ENCODE measurements at regions of chr2 and their contacts with region 1.

Region 1: DNA sequence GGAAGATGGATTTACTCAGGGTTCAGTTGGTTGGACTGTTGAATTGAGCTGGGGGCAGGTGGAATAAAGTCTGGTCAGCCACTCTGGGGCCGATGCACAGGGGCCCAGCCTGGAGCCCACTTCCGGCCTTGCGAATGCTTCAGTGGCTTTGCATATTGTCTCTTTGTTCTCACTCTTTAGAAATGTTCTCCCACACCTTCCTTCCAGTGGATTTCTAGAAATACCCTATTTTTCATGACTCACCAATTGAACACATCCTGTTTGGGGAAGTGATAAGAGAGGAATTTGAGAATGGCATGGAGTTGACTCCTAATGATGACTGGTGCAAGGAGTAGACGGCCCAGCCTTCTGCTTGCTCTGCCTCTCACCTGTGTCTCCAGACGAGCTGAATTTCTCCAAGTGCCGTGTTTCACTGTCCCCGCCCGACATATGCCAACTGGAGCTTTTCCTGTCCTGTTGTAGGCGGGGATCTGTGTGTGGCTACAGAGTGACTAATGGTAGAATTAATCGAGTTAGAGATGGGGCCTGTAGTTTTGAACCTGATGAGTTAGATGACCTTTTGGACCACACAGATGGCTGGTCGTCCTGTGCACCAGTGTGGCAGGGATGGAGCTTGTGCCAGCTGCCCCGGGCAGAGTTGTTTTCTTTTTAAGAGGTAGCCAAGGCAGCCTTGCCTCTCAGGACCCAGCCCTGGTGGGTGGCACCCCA is 28.2 kb downstream of the ASAP2 start:
- DNase-seq: peak; percentile 90 to 99
- H3K4me3 ChIP-seq: peak overlapping the region; percentile 59
- H3K27ac ChIP-seq: peak overlapping the region; percentile 98
- H3K4me1 ChIP-seq: peaks cover 93% of the 10 kb centered on the region
- H3K27me3 ChIP-seq: no peaks in the 10 kb centered on the region
- CTCF ChIP-seq: no peak

Region 2: GRCh38 chr2:9142551-9143263 is 92.1 kb before region 1 on chr2:
- CTCF ChIA-PET with region 1: no interaction called
- POLR2A ChIA-PET with region 1: no interaction called
- intact Hi-C with region 1: loop called (anchors 2 kb)
- DNase-seq: peak; percentile 85 to 97
- H3K4me3 ChIP-seq: peak overlapping the region; percentile 23; the same call in 1 of the 2 replicates
- H3K27ac ChIP-seq: peak overlapping the region; percentile 45
- H3K4me1 ChIP-seq: peaks cover 60% of the 10 kb centered on the region
- H3K27me3 ChIP-seq: no peaks in the 10 kb centered on the region
- CTCF ChIP-seq: peak; percentile 99

Region 3: DNA sequence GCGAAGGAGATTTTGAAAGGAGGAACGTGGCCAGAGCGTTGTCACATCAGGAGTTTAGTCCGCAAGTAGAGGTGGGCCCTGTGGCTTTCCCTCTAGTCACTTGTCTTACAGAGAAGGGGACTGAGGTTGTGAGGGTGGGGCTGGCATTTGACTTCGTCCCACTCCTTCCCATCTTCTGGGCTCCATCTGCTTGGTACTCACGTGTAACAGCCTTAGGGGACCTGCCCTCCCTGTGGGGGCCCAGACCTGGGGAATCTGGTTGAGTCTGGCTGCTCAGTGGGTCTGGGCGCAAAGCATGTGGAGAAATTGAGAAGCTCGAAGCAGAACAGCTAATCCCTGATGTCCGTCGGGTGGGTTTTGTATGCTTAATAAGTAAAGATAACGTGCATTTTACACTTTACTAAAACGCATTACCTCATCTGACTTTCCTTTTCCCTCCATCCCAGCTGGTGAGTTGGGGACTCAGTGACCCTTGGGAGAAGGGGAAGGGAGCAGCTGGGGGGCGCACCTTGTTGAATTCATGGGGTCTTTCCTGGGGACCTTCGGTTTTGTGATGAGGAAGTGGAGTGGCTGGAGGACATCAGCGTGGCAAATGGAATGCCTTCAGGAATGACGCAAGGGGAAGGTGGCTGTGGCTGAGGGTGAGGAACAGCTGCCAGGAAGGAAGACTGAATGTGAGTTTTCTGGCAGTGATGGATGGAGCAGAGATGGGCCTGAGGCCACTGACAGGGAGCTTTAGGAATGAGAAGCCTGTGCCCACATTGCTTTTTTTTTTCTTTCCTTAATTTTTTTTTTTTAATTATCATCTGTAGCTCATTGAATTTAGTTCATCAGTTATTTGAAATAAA is 16.5 kb after region 1 on chr2:
- CTCF ChIA-PET with region 1: no interaction called
- POLR2A ChIA-PET with region 1: interaction called, 4 read pairs
- intact Hi-C with region 1: loop called (anchors 1 kb)
- DNase-seq: peak; percentile 81 to 94
- H3K4me3 ChIP-seq: peak overlapping the region; percentile 9; the same call in 1 of the 2 replicates
- H3K27ac ChIP-seq: peak overlapping the region; percentile 67
- H3K4me1 ChIP-seq: peaks cover 59% of the 10 kb centered on the region
- H3K27me3 ChIP-seq: no peaks in the 10 kb centered on the region
- CTCF ChIP-seq: no peak

Region 4: GRCh38 chr2:9310377-9310776 is 75.5 kb after region 1 on chr2:
- CTCF ChIA-PET with region 1: no interaction called
- POLR2A ChIA-PET with region 1: interaction called, 5 read pairs
- intact Hi-C with region 1: loop called (anchors 1 kb)
- DNase-seq: peak; percentile 61 to 94
- H3K4me3 ChIP-seq: 0 out of 2 replicates have a peak overlapping the region, but pooled peaks have one; percentile 1
- H3K27ac ChIP-seq: peak overlapping the region; percentile 74
- H3K4me1 ChIP-seq: peaks cover 41% of the 10 kb centered on the region
- H3K27me3 ChIP-seq: no peaks in the 10 kb centered on the region
- CTCF ChIP-seq: no peak

Region 5: DNA sequence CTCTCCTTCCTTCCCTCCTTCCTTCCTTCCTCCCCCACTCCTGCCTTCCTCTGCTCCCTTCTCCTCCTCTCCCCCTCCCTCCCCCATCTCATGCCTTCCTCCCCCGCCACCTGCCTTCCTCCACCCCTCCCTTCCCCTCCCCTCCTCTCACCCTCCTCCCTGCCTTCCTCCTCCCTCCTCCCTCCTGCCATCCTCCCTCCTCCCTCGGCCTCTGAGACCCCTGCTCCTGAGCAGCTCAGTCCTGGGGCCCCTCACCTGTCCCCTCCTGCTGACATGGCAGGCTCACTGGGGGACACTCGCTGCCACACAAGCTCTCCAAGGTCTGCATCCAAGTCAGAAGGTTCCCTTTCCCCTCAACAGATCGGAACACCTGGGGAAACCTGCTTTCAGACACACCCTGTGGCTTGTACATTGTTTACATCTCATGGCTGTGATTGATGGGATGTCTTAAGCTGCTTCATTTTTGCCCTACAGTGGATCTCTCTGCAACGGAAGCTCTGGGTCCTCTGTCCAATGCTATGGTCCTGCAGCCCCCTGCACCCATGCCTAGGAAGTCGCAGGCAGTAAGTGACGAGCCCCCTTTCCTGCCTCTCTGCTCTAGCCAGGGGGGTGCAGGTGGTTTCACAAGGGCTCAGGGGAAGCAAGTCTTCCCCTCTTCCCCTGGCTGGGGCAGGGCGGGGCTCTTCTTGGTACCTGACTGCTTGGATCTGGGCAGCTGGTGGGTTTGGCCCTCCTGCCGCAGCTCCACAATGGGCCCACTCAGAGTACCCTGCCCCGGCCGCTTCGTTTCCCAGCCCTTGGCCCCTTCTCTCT is 165.6 kb after region 1 on chr2:
- CTCF ChIA-PET with region 1: no interaction called
- POLR2A ChIA-PET with region 1: interaction called, 10 read pairs
- intact Hi-C with region 1: no loop called
- DNase-seq: peak; percentile 39 to 89
- H3K4me3 ChIP-seq: no peak overlapping the region
- H3K27ac ChIP-seq: no peak overlapping the region
- H3K4me1 ChIP-seq: peaks cover 42% of the 10 kb centered on the region
- H3K27me3 ChIP-seq: no peaks in the 10 kb centered on the region
- CTCF ChIP-seq: no peak

Measured in PC-9 (cell line).